ENCODE measurements at regions of chr17 and their contacts with region 1.

Region 1: DNA sequence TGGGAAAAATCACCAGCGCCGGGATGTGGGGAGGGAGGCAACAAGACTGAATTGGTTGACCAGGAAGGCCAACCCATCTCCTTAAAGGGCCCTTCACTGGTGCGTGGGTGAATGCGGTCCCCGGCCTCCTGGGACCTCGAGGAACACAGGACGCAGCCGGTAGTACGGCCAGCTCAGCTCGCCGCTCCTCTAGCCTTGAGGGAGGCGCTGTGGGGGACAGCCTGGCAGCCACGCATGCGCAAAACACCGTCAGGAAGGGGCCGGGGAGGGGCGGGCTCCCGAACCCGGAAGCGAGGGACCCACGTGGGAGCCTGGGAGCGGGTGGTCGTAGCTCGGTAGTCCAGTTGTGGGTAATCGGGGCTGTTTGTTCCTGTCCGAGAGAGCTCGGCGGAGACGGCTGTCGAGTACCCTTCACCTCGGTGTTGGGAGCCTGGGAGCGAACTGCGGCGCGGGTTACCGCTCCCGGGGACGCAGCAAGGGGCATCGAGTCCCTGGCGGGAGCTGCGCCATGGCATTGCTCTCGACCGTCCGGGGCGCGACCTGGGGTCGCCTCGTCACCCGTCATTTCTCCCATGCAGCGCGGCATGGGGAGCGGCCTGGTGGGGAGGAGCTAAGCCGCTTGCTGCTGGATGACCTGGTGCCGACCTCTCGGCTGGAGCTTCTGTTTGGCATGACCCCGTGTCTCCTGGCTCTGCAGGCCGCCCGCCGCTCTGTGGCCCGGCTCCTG is at the start of gene MRM1:
- DNase-seq: peak; percentile 92
- H3K4me3 Mint-ChIP-seq: peak within 1 kb of the TSS; percentile 93
- H3K27ac Mint-ChIP-seq: peak within 1 kb of the TSS; percentile 85
- H3K4me1 Mint-ChIP-seq: peaks cover 24% of the 10 kb centered on the region
- H3K27me3 Mint-ChIP-seq: no peaks in the 10 kb centered on the region
- CTCF ChIP-seq: no peak
- total RNA-seq, gene MRM1: 5.7 and 10.0 TPM in 2 replicates

Region 2: DNA sequence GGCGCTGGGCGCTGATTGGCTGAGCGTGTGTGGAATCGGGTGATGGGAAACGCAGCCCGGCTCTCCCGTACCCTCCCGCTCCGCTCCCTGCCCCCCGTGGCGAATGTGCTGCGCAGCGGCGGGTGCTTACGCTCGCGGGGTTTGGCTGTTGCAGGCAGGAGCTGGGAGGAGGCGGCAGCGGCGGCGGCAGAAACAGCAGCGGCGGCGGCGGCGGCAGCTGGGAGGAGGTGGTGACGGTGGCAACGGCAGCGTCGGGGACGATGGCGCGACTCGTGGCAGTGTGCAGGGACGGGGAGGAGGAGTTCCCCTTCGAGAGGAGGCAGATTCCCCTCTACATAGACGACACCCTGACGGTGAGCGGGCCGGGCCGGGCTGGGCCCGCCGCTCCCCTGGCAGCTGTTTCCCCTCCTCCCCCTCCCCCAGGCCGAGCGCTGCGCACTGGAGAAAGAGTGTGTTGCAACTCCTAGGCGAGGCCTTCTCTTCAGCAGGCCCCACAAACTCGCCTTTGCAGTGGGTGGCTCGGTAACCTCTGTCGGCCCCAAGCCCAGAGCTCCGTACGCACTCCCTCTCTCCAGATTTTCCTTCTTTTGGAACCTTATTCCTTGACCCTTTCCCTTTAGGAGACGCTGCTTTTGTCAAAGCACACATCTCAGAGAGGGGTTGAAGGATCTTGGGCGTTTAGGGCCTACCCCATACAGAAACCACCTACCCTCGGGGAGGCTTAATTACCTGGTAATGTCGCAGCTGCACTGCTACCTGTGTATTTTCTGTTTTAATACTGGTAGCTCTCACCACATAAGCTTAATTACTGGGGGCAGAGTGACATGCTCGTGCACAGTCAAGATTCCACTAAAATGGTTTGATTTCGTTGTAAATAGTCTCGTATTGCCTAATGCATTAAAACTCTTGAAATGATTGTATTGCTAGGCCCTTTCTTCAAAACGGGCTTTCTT is 55.7 kb before region 1 on chr17:
- CTCF ChIA-PET with region 1: interaction called, 11 read pairs
- POLR2A ChIA-PET with region 1: interaction called, 66 read pairs
- intact Hi-C with region 1: no loop called
- DNase-seq: peak; percentile 96
- H3K4me3 Mint-ChIP-seq: peak overlapping the region; percentile 96
- H3K27ac Mint-ChIP-seq: peak overlapping the region; percentile 95
- H3K4me1 Mint-ChIP-seq: peaks cover 19% of the 10 kb centered on the region
- H3K27me3 Mint-ChIP-seq: no peaks in the 10 kb centered on the region
- CTCF ChIP-seq: no peak

Region 3: GRCh38 chr17:36611345-36612072 is 10.0 kb after region 1 on chr17:
- CTCF ChIA-PET with region 1: interaction called, 17 read pairs
- POLR2A ChIA-PET with region 1: interaction called, 22 read pairs
- intact Hi-C with region 1: no loop called
- DNase-seq: peak; percentile 79
- H3K4me3 Mint-ChIP-seq: no peak overlapping the region
- H3K27ac Mint-ChIP-seq: no peak overlapping the region
- H3K4me1 Mint-ChIP-seq: peaks cover 13% of the 10 kb centered on the region
- H3K27me3 Mint-ChIP-seq: no peaks in the 10 kb centered on the region
- CTCF ChIP-seq: no peak

Region 4: GRCh38 chr17:36705874-36706731 is 104.6 kb after region 1 on chr17:
- CTCF ChIA-PET with region 1: no interaction called
- POLR2A ChIA-PET with region 1: no interaction called
- intact Hi-C with region 1: loop called (anchors 1 kb)
- DNase-seq: peak; percentile 58
- H3K4me3 Mint-ChIP-seq: no peak overlapping the region
- H3K27ac Mint-ChIP-seq: no peak overlapping the region
- H3K4me1 Mint-ChIP-seq: peaks cover 5% of the 10 kb centered on the region
- H3K27me3 Mint-ChIP-seq: peaks cover 50% of the 10 kb centered on the region
- CTCF ChIP-seq: peak; percentile 76